AG04450 (cell line): ENCODE measurements at regions of chr10 and their contacts with region 1.

Region 1: DNA sequence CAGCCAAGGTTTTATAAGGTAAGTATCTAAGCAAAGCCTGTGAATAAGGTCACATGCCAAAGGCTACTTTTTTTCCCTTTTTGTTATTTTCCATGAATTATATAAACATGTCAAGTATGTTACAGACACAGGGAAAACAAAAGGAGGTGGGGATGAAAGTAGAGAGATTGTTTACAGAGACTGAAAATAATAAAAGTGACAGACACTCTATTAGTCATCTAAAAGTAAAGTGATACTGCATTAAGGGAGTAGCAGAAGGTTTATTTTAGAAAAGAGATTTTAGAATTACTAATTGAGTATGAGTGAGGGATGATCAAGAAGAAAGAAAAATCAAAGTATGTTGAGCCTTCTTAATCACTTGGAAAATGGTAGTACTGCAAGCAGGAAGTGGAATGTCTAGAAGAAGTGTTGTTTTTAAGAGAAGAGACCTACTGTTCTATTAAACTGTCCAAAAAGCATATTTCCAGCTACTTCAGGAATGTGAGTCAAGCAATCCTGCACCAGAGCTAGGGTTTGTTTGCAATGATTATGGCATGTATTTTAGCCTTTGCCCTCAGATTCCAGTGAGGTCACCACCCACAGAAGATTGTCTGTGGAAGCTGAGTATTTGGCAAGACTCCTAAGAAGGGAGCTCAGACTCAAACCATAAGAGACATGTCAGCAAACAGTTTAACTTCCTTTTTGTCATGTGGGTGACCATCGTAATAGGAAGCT is 177.9 kb upstream of the PLXDC2 start:
- DNase-seq: peak; percentile 90
- H3K4me3 ChIP-seq: peak overlapping the region; percentile 46
- H3K27ac ChIP-seq: peak overlapping the region; percentile 31
- H3K27me3 ChIP-seq: no peaks in the 10 kb centered on the region
- CTCF ChIP-seq: no peak

Region 2: GRCh38 chr10:19654576-19654975 is 16.2 kb after region 1 on chr10:
- CTCF ChIA-PET with region 1: interaction called, 4 read pairs
- POLR2A ChIA-PET with region 1: interaction called, 13 read pairs
- DNase-seq: peak; percentile 65
- H3K4me3 ChIP-seq: 0 out of 2 replicates have a peak overlapping the region, but pooled peaks have one; percentile 14
- H3K27ac ChIP-seq: no peak overlapping the region
- H3K27me3 ChIP-seq: no peaks in the 10 kb centered on the region
- CTCF ChIP-seq: no peak

Region 3: GRCh38 chr10:19775296-19775695 is 137.0 kb after region 1 on chr10:
- CTCF ChIA-PET with region 1: no interaction called
- POLR2A ChIA-PET with region 1: no interaction called
- DNase-seq: no peak
- H3K4me3 ChIP-seq: no peak overlapping the region
- H3K27ac ChIP-seq: no peak overlapping the region
- H3K27me3 ChIP-seq: no peaks in the 10 kb centered on the region
- CTCF ChIP-seq: no peak